Activated CD4-positive, alpha-beta T cell treated with anti-CD3 and anti-CD28 coated beads, Interleukin-2, amount 10 ng/mL, durations not matched to agents 24 days and 14 days (primary cell): ENCODE measurements at regions of chr16 and their contacts with region 1.

Region 1: DNA sequence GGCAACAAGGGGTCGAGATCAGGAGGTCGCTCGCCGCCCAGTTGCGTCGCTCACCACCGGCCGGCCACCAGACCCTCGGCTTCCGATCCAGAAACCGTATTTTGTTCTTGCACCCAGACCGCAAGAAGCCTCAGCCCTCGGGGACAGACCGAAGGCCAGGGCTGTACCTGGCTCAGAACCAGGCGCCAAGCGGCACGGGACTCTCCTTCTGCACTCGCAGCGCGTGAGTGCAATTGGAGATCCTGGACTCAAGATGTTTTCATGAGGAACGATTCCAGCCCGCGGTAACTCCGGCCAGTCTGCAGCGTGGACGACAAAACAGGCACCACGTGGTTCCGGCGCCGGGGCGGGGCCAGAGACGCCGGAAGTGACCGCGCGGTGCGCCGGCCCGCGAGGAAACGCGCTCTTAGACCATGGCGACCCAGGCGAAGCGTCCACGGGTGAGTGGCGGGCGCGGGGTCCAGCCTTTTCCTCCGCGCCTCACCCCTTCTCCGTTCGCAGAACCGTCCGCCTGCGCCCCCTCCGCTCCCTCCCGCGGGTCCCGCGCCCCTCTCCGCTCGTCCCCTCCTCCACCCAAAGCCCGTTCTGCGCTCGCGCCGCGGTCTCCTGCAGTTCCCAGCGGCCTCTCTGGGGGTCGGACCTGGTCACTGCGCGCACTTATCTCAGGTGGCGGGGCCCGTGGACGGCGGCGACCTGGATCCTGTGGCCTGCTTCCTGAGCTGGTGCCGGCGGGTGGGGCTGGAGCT is at the start of gene SETD6:
- DNase-seq: peak; percentile 96
- H3K4me3 Mint-ChIP-seq: peak within 1 kb of the TSS; percentile 94
- H3K27ac Mint-ChIP-seq: peak within 1 kb of the TSS; percentile 91
- H3K4me1 Mint-ChIP-seq: peaks cover 19% of the 10 kb centered on the region
- H3K27me3 Mint-ChIP-seq: no peaks in the 10 kb centered on the region
- total RNA-seq, gene SETD6: 33.4 and 34.4 TPM in 2 replicates

Region 2: DNA sequence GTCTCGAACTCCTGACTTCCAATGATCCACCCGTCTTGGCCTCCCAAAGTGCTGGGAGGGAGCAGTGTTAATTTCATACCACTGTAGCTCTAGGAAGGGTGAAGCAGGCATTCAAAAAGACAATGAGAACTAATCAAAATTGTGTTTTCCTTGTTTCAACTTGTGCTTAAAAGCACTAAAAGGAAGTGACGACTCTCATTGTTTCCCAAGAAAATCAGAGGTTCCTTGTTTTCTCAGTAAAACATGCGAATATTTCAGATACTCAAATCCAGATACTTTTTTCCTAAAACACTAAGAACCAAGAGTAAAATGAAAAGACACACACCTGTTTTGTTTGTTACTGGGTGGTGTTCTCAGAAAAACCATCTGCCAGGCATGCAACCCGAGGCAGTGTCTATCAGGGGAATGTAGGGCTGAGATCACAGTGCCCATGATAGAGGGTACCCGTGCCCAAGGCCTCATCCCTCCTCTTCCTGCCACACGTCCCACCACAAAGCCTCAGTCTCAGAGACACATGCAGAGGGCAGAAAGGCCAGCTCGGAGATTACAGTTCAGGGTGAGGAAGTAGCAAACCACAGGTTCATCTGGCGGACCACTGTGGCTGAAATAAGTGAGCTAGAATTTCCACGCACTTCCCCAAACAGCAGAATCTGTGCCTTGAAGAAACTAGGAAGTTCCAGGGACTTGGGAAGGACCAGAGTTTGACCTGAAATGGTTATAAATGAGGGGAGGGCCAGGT is 89.4 kb before region 1 on chr16:
- intact Hi-C with region 1: no loop called
- DNase-seq: peak; percentile 72
- H3K4me3 Mint-ChIP-seq: peak overlapping the region; percentile 13
- H3K27ac Mint-ChIP-seq: peak overlapping the region; percentile 54
- H3K4me1 Mint-ChIP-seq: peaks cover 12% of the 10 kb centered on the region
- H3K27me3 Mint-ChIP-seq: peaks cover 15% of the 10 kb centered on the region

Region 3: GRCh38 chr16:58501242-58502131 is 13.8 kb before region 1 on chr16:
- intact Hi-C with region 1: no loop called
- DNase-seq: peak; percentile 87
- H3K4me3 Mint-ChIP-seq: peak overlapping the region; percentile 81
- H3K27ac Mint-ChIP-seq: no peak overlapping the region
- H3K4me1 Mint-ChIP-seq: peaks cover 7% of the 10 kb centered on the region
- H3K27me3 Mint-ChIP-seq: peaks cover 4% of the 10 kb centered on the region

Region 4: DNA sequence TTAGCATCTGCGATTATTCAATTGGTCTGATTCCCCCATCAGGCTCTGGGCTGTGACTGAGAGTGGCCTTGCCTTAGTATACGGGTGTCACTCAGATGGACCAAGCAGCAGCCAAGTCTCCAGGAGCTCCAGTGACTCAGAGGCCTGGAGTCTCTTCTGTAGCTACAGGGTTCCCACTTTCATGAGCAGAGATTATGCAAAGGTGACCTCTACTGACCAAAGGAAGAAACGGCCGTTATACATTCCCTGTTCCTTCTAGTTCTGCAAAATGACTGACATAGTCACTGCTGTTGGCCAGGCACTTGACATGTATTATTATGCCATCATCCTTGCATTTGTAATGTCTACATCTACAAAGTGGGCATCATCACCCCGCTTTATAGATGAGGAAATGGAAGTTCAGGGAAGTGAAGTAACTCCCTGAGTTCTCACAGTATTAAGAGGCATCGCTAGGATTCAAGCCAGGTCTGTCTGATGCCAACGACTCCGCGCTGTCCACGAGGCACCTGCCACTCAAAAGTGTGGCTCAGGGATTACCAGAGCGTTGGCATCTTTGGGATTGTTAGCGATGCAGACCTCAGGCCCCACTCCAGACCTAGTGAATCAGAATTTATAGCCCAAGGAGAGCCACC is 146.0 kb after region 1 on chr16:
- intact Hi-C with region 1: loop called (anchors 1 kb)
- DNase-seq: peak; percentile 63
- H3K4me3 Mint-ChIP-seq: no peak overlapping the region
- H3K27ac Mint-ChIP-seq: no peak overlapping the region
- H3K4me1 Mint-ChIP-seq: no peaks in the 10 kb centered on the region
- H3K27me3 Mint-ChIP-seq: no peaks in the 10 kb centered on the region